ENCODE measurements at regions of chr19 and their contacts with region 1.

Region 1: DNA sequence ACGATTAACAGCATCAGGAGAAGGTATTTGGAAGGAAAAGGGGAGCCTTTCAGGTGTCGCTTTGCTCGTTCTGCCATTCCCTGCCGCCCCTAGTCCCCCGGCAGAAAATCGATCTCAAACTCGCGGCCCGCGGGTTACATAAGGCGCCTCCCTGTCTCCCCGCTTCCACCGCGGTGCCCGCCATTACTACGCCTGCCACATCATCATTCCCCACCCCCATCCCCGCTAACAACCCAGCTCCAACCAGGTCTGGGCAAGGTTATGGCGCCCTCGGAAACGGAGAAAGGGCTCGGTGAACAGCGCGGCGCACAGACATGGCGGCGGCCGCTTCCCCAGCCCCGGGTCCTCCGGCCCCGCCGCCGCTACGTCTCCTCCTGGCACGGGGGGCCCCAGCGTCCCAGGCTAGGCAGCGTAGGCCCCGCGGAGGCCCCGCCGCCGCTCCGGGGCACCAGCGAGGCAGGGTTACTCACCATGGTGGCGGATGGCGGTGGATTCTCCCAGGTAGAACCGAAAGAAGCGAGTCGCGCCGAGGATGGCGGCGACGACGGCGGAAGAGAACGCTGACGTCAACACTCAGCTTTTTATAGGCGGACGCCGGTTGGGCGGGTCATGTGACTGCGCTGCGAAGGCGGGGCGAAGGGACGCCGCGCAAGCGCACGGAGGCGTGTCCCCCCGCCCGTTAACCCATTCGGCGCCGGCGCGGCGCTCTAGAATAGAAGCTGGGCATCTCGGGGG is at the start of gene EEF2:
- DNase-seq: peak; percentile 77 to 91 (median 86)
- H3K4me3 ChIP-seq: peak within 1 kb of the TSS; percentile 65 to 100 (median 92)
- H3K27ac ChIP-seq: peak within 1 kb of the TSS; percentile 73 to 99 (median 97)
- H3K27me3 ChIP-seq: no peaks in the 10 kb centered on the region
- CTCF ChIP-seq: peak in 19 of 56 donors; percentile 5 to 48 (median 25)
- total RNA-seq, gene EEF2: 863 to 1,554 (median 1,176) TPM

Region 2: DNA sequence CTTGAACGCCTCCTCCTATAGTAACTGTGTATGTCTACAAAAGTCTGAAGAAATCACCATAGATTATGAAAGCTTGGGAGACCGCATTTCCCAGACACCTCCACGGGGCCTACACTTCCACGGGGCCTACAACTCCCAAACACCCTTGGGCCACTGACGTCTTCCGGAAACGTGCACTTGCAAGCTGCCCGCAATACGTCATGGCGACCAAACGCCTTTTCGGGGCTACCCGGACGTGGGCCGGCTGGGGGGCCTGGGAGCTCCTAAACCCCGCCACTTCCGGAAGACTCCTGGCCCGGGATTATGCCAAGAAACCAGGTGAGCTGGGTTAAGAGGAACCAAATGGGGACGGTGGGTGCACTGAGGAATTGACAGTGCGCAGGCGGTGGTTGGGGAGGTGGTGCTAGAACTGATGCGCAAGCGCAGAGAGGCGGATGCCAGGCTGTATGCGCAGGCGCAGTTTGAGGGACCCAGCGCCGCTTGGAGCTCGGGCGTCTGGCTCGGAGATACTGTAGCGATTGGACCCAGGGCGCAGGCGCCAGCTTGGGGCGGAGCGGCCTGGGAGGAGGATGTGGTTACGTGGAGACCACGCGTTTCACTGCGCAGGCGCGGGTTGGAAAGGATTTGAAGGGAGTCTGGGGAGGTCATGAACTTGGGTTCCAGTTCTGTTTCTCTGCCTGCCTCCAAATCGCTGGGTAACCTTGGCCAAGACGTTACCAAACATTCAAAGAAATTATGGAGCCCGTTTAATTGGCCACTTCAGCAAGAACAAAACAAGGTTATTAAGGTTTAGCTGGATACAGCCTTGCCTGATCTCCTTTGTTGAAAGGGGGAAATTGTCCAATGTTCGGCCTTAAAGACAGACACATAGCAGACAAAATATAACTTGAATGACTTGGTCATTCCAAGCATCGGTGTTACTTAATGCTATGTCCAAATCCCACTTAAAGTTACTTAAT is 222.3 kb before region 1 on chr19 and contains the start of gene MRPL54:
- intact Hi-C with region 1: loop called in 1 of 2 experiments (anchors 5 kb)
- DNase-seq: peak; percentile 96 to 99 (median 98)
- H3K4me3 ChIP-seq: peak within 1 kb of the TSS; percentile 64 to 100 (median 97)
- H3K27ac ChIP-seq: peak within 1 kb of the TSS; percentile 78 to 100 (median 99)
- H3K27me3 ChIP-seq: no peaks in the 10 kb centered on the region
- CTCF ChIP-seq: peak in 33 of 56 donors; percentile 2 to 49 (median 19)
- total RNA-seq, gene MRPL54: 21.6 to 65.1 (median 45.6) TPM

Region 3: GRCh38 chr19:3923912-3924311 is 61.2 kb before region 1 on chr19:
- intact Hi-C with region 1: no loop called
- DNase-seq: no peak
- H3K4me3 ChIP-seq: no peak overlapping the region
- H3K27ac ChIP-seq: no peak overlapping the region
- H3K27me3 ChIP-seq: no peaks in the 10 kb centered on the region
- CTCF ChIP-seq: no peak

Region 4: GRCh38 chr19:4007021-4007835 is 22.2 kb after region 1 on chr19 and contains the start of gene PIAS4:
- intact Hi-C with region 1: loop called (anchors 1 kb)
- DNase-seq: peak; percentile 89 to 96 (median 94)
- H3K4me3 ChIP-seq: peak within 1 kb of the TSS; percentile 64 to 100 (median 93)
- H3K27ac ChIP-seq: peak within 1 kb of the TSS; percentile 87 to 99 (median 97)
- H3K27me3 ChIP-seq: no peaks in the 10 kb centered on the region
- CTCF ChIP-seq: peak in 26 of 56 donors; percentile 5 to 42 (median 22)
- total RNA-seq, gene PIAS4: 24.8 to 57.8 (median 38.6) TPM

Region 5: GRCh38 chr19:4123615-4124568 is 138.8 kb after region 1 on chr19 and contains the start of gene MAP2K2:
- intact Hi-C with region 1: loop called in 1 of 2 experiments (anchors 5 kb)
- DNase-seq: peak; percentile 87 to 98 (median 94)
- H3K4me3 ChIP-seq: peak within 1 kb of the TSS; percentile 55 to 87 (median 72)
- H3K27ac ChIP-seq: peak within 1 kb of the TSS in 57 of 59 donors; percentile 25 to 96 (median 85)
- H3K27me3 ChIP-seq: no peaks in the 10 kb centered on the region
- CTCF ChIP-seq: peak in 37 of 56 donors; percentile 9 to 65 (median 31)
- total RNA-seq, gene MAP2K2: 118 to 197 (median 143) TPM

Region 6: DNA sequence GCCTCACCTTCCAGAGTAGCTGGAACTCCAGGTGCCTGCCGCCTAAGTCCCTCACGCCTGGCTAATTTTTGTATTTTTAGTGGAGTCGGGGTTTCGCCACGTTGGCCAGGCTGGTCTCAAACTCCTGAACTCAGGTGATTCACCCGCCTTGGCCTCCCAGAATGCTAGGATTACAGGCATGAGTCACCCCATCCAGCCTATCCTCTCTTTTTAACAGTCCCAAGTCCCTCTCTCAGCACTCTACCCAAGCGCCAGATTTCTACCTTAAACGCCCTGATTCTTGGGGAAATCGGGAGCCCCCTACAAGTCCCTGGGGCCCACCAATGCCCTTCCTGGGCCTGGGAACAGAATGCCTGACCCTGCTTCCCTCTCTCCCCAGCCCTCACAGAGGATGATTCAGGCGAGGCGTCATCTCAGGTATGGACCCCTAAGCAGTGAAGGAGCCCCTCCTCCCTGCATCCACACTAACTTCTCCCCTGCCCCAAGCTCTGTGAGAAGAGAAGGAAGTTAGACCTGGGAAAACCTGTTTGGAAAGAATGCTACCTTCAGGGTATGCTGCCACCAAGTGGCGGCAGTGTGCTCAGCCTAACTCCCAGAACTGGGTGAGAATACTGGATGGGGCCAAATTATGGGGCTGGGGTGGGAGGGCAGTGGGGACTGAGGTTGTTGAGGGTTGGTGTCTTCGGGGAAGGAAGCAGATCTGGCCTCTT is 223.5 kb after region 1 on chr19:
- intact Hi-C with region 1: loop called (anchors 1 to 2 kb)
- DNase-seq: no peak
- H3K4me3 ChIP-seq: no peak overlapping the region
- H3K27ac ChIP-seq: no peak overlapping the region
- H3K27me3 ChIP-seq: no peaks in the 10 kb centered on the region
- CTCF ChIP-seq: peak in 32 of 56 donors; percentile 12 to 44 (median 24)